MCF 10A (cell line): ENCODE measurements at regions of chr2 and their contacts with region 1.

Region 1: DNA sequence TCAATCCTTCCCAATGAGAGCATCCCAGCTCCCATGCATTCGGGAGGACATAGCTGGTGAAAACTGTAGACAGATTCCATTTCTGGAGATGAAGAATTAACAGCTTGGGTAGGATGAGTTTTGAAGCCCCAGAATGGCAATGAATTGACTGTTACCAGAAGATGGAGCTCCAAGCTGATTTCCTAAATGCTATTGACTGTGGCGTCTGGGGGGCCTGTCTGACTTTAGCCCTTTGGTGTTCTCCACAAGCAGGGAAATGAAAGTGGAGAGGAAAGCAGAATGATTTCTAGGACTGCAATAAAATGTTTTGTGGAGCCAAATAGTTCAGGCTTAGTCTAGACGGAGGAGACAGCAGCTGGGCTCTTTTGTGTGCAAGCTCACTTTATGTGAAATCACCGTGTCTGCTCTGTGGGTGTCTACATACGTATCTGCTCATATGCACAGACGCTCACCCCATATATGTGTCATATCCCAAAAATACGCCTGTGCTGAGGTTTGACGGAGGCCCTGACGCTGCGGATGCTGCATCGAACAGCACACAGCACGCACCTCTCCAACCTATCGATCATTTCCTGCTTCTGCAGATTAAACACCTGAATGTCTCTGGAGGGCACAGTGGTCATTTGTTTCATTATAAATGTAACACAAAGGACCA is 166.4 kb upstream of the PXDN start:
- DNase-seq: peak; percentile 22
- H3K4me3 Mint-ChIP-seq: no peak overlapping the region
- H3K27ac Mint-ChIP-seq: no peak overlapping the region
- H3K4me1 Mint-ChIP-seq: no peaks in the 10 kb centered on the region
- H3K27me3 Mint-ChIP-seq: peaks cover 45% of the 10 kb centered on the region
- CTCF ChIP-seq: peak; percentile 24

Region 2: GRCh38 chr2:1931003-1931914 is 20.5 kb after region 1 on chr2:
- CTCF ChIA-PET with region 1: no interaction called
- POLR2A ChIA-PET with region 1: no interaction called
- intact Hi-C with region 1: no loop called
- DNase-seq: no peak
- H3K4me3 Mint-ChIP-seq: no peak overlapping the region
- H3K27ac Mint-ChIP-seq: no peak overlapping the region
- H3K4me1 Mint-ChIP-seq: no peaks in the 10 kb centered on the region
- H3K27me3 Mint-ChIP-seq: peaks cover 10% of the 10 kb centered on the region
- CTCF ChIP-seq: no peak

Region 3: GRCh38 chr2:2229626-2230432 is 319.1 kb after region 1 on chr2:
- CTCF ChIA-PET with region 1: interaction called, 3 read pairs
- POLR2A ChIA-PET with region 1: no interaction called
- intact Hi-C with region 1: loop called (anchors 1 kb)
- DNase-seq: no peak
- H3K4me3 Mint-ChIP-seq: no peak overlapping the region
- H3K27ac Mint-ChIP-seq: no peak overlapping the region
- H3K4me1 Mint-ChIP-seq: no peaks in the 10 kb centered on the region
- H3K27me3 Mint-ChIP-seq: peaks cover 40% of the 10 kb centered on the region
- CTCF ChIP-seq: peak; percentile 20

Region 4: GRCh38 chr2:2331881-2332280 is 421.2 kb after region 1 on chr2:
- CTCF ChIA-PET with region 1: no interaction called
- POLR2A ChIA-PET with region 1: no interaction called
- intact Hi-C with region 1: no loop called
- DNase-seq: no peak
- H3K4me3 Mint-ChIP-seq: no peak overlapping the region
- H3K27ac Mint-ChIP-seq: no peak overlapping the region
- H3K4me1 Mint-ChIP-seq: no peaks in the 10 kb centered on the region
- H3K27me3 Mint-ChIP-seq: no peaks in the 10 kb centered on the region
- CTCF ChIP-seq: no peak

Region 5: DNA sequence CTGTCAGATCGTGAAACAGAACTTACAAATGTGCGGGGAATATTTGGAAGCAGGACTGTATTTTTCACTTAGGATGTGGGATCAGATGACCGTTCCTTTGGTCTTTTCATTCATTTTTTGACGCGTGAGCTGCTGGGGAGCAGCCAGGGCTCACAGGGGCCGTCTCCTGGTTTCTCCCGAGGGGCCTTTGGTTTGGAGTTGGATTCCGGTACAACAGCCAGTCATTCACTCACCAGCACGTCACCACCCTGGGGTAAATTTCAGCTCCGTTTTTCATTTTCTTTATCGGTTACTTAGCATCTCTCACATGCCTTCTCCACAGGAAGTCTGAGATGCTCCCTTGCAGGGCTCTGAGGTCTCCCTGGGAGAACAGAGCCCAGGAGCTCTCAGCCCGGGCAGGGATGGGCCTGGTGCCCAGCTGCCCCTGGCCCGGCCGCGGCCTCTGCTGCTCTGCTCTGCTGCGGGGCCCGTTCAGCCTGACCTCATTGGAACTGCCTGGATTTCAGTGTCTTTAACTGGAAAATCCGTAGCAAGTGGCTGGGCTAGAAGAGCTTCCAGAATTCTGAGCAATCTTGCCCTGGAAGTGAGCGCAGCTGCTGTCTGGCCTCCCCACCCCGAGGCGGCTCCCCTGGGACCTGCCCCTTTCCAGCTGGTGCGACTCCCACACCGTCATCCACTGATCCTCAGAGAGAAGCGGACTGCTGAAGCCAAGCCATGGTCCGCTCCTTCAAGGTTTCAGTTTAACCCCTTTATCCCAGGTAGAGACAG is 1131.3 kb after region 1 on chr2:
- CTCF ChIA-PET with region 1: no interaction called
- POLR2A ChIA-PET with region 1: no interaction called
- intact Hi-C with region 1: no loop called
- DNase-seq: no peak
- H3K4me3 Mint-ChIP-seq: no peak overlapping the region
- H3K27ac Mint-ChIP-seq: no peak overlapping the region
- H3K4me1 Mint-ChIP-seq: no peaks in the 10 kb centered on the region
- H3K27me3 Mint-ChIP-seq: no peaks in the 10 kb centered on the region
- CTCF ChIP-seq: no peak